HEK293 (cell line): ENCODE measurements at regions of chr14 and their contacts with region 1.

Region 1: DNA sequence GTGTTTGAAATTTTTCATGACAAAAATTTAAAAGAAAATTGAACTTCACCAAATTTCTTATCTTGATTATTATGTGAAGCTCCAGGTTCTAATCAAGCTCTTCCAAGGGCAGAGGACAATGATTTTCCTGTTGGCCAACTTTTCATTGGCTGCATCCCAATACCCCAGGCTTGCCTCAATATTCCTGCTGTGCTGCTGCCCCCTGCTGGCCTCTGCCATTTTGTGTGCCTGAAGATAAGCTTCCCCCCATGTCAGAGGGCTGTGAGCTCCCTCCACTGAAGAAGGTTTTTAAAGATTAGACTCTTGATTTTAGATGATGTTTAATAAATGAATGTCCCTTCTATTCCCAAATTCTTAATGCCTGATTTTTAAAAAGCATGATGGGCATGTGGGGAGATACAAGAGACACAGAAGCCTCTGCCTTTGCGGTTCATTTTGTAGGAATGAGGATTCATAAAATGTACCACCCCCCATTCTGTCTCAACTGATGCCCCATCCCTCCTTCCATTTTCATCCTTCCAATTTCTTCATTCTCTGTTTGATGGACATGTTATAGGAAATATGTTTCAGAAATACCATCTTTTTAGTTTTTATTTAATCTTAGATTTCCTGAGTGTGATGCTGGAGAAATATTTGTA is 76.7 kb upstream of the RGS6 start:
- H3K4me3 ChIP-seq: no peak overlapping the region
- H3K27ac ChIP-seq: no peak overlapping the region
- H3K4me1 ChIP-seq: no peaks in the 10 kb centered on the region
- CTCF ChIP-seq: no peak; the same call in 1 of the 2 replicates

Region 2: DNA sequence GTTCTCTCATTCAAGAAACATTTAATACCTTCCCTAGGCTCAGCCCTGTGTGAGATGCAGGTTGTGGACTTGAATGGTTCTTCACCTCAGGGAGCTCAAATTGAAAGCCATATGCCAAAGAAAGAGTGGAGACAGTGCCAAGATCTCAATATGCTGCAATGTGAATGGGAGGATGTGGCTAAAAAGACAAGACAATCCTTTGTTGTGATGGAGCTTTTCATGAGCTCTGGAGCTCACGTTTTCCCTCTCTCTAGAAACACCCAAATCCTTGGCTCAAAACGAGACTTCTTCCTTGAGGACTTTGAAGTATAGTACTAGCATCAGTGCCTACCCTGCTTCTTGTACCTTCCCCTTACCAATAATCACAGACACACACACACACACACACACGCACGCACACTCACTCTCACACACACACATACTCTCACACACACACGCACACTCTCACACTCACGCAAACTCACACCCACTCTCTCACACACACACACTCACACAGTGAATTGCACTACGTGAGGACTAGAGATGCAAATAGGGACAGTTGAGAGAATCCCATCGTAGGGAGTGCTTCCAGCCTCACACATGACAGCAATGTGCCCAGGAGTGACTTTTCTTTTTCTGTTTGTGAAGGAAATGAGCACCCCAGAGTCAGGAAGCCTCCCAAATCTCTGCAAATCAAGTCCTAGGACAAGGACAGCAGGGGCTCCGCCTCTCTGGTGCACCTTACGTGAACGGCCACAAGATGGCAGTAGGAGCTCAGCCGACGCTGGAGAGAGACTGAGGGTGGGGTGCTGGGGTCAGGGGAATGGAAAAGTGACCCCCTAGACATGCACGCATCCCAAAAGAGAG is 716.8 kb before region 1 on chr14:
- CTCF ChIA-PET with region 1: interaction called, 11 read pairs
- POLR2A ChIA-PET with region 1: no interaction called
- H3K4me3 ChIP-seq: no peak overlapping the region
- H3K27ac ChIP-seq: no peak overlapping the region
- H3K4me1 ChIP-seq: no peaks in the 10 kb centered on the region
- CTCF ChIP-seq: peak; percentile 59

Region 3: DNA sequence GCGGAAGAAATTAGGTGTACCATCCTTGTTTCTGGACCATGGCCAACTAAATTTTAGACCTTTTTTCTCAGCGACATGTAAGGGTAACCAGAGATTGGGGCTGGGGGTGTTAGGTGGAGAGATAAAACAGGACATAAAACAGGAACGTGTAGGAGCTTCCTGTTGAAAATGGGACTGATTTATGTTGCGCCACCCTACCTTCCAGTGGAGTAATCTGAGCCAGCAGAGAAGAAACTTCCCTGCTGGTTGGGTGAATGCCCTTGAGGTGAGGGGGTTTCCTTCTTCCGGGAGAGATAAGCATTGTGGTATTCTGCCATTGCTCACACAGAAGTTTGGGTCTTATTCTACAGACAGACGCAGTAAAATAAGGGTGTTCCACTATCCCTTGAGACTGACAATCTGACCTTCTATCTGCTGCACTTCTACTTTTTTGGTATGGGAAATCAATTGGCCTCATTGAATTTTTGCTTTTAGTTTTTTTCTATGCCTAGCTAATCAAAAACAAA is 530.7 kb before region 1 on chr14:
- CTCF ChIA-PET with region 1: no interaction called
- POLR2A ChIA-PET with region 1: no interaction called
- H3K4me3 ChIP-seq: no peak overlapping the region
- H3K27ac ChIP-seq: no peak overlapping the region
- H3K4me1 ChIP-seq: peaks cover 13% of the 10 kb centered on the region
- CTCF ChIP-seq: no peak

Region 4: GRCh38 chr14:71720978-71721624 is 134.4 kb before region 1 on chr14:
- CTCF ChIA-PET with region 1: interaction called, 20 read pairs
- POLR2A ChIA-PET with region 1: no interaction called
- H3K4me3 ChIP-seq: no peak overlapping the region
- H3K27ac ChIP-seq: no peak overlapping the region
- H3K4me1 ChIP-seq: no peaks in the 10 kb centered on the region
- CTCF ChIP-seq: peak; percentile 55

Region 5: GRCh38 chr14:71753126-71753830 is 102.2 kb before region 1 on chr14:
- CTCF ChIA-PET with region 1: interaction called, 23 read pairs
- POLR2A ChIA-PET with region 1: interaction called, 3 read pairs
- H3K4me3 ChIP-seq: no peak overlapping the region
- H3K27ac ChIP-seq: no peak overlapping the region
- H3K4me1 ChIP-seq: 0 out of 2 replicates have a peak, but pooled peaks cover 2% of the 10 kb centered on the region
- CTCF ChIP-seq: peak; percentile 91

Region 6: GRCh38 chr14:71783085-71783484 is 72.4 kb before region 1 on chr14:
- CTCF ChIA-PET with region 1: interaction called, 10 read pairs
- POLR2A ChIA-PET with region 1: no interaction called
- H3K4me3 ChIP-seq: no peak overlapping the region
- H3K27ac ChIP-seq: no peak overlapping the region
- H3K4me1 ChIP-seq: peaks cover 3% of the 10 kb centered on the region; the same call in 1 of the 2 replicates
- CTCF ChIP-seq: no peak